ENCODE measurements at regions of chr4 and their contacts with region 1.

Region 1: DNA sequence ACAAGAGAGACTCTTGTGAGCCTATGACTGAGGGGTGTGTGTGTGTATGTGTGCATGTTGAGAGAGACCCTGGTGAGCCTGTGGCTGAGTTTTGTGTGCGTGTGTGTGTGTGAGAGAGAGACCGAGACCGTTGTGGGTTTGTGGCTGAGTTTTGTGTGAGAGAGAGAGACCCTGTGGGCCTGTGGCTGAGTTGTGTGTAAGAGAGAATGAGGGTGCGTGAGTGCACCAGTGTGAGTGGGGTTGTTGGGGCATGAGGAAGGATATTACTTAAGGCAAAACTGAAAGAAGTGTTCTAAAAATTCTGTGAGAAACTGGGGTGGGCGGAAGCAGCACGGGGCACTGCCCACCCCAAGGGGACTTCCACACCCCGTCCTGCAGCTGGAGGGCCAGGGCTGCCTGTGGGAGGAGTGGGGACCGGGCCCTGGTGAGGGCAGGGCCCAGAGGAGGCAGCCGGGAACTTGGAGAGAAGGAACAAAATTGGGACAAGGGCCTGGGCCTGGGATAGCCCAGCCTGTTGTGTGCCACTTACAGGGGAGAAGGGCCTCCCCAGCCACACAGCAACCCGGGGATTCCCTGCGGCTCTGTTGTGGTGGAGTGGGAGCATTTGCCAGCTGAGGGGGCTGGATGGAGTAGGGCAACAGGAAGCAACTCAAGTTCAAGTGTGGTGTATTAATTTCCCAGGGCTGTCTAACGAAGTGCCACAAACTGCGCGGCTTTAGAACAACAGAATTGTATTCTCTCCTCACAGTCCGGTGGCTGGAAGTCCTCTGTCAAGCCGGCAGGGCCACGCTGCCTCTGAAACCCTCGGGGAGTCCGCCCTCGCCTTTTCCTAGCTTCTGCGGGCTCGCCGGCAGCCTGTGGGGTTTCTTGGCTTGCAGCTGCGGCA is 22.1 kb downstream of the TMEM131L start:
- DNase-seq: peak; percentile 94
- ATAC-seq: peak; percentile 63
- H3K4me3 ChIP-seq: peak overlapping the region; percentile 85
- H3K27ac ChIP-seq: peak overlapping the region; percentile 81
- H3K4me1 ChIP-seq: peaks cover 32% of the 10 kb centered on the region
- H3K27me3 ChIP-seq: no peaks in the 10 kb centered on the region
- CTCF ChIP-seq: no peak
- EP300 ChIP-seq: peak; percentile 32 to 66; a peak in 2 of 4 replicates
- POLR2A ChIP-seq: peak; percentile 70
- RAD21 ChIP-seq: no peak

Region 2: DNA sequence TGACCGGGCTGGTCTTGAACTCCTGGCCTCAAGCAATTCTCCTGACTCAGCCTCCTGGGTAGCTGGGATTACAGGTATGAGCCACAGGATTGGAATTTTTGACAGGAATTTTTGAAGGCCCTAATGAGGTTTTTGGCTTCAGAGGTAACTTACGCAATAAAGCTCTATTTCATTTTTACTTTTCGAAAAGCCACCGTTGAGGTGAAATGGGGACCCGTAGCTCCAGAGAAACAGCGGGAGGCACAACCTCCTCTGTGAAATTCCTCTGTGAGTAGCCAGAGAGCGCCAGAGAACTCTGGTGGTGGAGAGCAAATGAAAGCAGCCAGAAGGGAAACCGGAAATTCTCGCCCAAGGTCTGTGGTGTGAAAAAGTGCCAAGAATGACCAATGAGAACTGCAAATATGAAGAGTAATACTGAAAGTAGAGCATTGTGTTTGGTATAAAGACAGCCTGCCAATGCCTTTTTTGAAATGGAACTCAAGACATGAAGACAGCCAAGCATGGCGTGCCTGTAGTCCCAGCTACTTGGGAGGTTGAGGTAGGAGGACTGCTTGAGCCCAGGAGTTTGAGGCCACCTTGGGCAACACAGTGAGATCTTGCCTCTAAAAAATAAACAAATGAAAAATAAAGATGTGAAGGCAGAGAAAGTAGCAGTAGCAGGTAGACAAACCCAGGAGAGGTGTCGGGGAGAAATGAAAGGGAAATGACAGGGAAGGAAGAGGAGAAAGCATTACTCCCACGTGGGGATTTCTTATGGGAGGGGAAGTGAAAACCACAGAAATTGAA is 55.1 kb before region 1 on chr4:
- CTCF ChIA-PET with region 1: interaction called, 16 read pairs
- POLR2A ChIA-PET with region 1: interaction called, 9 read pairs
- RAD21 ChIA-PET with region 1: interaction called, 28 read pairs
- SMC1A ChIA-PET with region 1: interaction called, 32 read pairs
- in situ Hi-C with region 1: no loop called
- intact Hi-C with region 1: loop called (anchors 1 kb)
- DNase-seq: peak; percentile 99
- ATAC-seq: peak; percentile 91
- H3K4me3 ChIP-seq: peak overlapping the region; percentile 56
- H3K27ac ChIP-seq: peak overlapping the region; percentile 84
- H3K4me1 ChIP-seq: peaks cover 31% of the 10 kb centered on the region
- H3K27me3 ChIP-seq: no peaks in the 10 kb centered on the region
- CTCF ChIP-seq: peak; percentile 86 to 96 (median 93)
- EP300 ChIP-seq: peak; percentile 78
- POLR2A ChIP-seq: peak; percentile 57
- RAD21 ChIP-seq: peak; percentile 99

Region 3: DNA sequence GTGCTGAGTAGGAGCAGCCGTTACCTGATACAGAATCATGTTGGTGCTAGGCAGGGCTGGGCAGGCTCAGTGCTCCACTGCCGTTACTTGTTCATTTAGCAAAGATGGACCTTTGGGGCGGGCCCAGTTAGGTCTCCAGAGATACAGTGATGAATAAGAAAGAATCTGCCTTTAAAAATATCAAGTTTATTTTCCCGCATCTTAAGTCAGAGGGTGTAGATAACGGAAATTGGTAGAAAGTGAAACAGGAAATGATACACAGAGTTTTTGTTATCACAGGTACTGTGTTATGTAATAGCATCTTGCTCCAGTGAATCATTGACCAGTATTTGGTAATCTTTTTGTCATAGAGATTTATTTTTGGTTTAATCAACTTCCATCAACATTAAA is 16.6 kb before region 1 on chr4:
- CTCF ChIA-PET with region 1: interaction called, 54 read pairs
- POLR2A ChIA-PET with region 1: interaction called, 268 read pairs
- RAD21 ChIA-PET with region 1: interaction called, 429 read pairs
- SMC1A ChIA-PET with region 1: interaction called, 356 read pairs
- in situ Hi-C with region 1: no loop called
- intact Hi-C with region 1: loop called (anchors 1 kb)
- DNase-seq: no peak
- ATAC-seq: peak; percentile 23
- H3K4me3 ChIP-seq: peak overlapping the region; percentile 98
- H3K27ac ChIP-seq: peak overlapping the region; percentile 80
- H3K4me1 ChIP-seq: peaks cover 45% of the 10 kb centered on the region
- H3K27me3 ChIP-seq: no peaks in the 10 kb centered on the region
- CTCF ChIP-seq: no peak
- EP300 ChIP-seq: no peak; a peak in 1 of 4 replicates
- POLR2A ChIP-seq: no peak
- RAD21 ChIP-seq: no peak

Region 4: GRCh38 chr4:153514001-153514526 is 25.8 kb after region 1 on chr4:
- CTCF ChIA-PET with region 1: interaction called, 3 read pairs
- POLR2A ChIA-PET with region 1: interaction called, 322 read pairs
- RAD21 ChIA-PET with region 1: interaction called, 197 read pairs
- SMC1A ChIA-PET with region 1: interaction called, 85 read pairs
- in situ Hi-C with region 1: no loop called
- intact Hi-C with region 1: no loop called
- DNase-seq: no peak
- ATAC-seq: peak; percentile 40
- H3K4me3 ChIP-seq: no peak overlapping the region
- H3K27ac ChIP-seq: peak overlapping the region; percentile 15; the same call in 1 of the 2 replicates
- H3K4me1 ChIP-seq: peaks cover 30% of the 10 kb centered on the region
- H3K27me3 ChIP-seq: no peaks in the 10 kb centered on the region
- CTCF ChIP-seq: no peak
- EP300 ChIP-seq: no peak
- POLR2A ChIP-seq: no peak
- RAD21 ChIP-seq: no peak

Region 5: DNA sequence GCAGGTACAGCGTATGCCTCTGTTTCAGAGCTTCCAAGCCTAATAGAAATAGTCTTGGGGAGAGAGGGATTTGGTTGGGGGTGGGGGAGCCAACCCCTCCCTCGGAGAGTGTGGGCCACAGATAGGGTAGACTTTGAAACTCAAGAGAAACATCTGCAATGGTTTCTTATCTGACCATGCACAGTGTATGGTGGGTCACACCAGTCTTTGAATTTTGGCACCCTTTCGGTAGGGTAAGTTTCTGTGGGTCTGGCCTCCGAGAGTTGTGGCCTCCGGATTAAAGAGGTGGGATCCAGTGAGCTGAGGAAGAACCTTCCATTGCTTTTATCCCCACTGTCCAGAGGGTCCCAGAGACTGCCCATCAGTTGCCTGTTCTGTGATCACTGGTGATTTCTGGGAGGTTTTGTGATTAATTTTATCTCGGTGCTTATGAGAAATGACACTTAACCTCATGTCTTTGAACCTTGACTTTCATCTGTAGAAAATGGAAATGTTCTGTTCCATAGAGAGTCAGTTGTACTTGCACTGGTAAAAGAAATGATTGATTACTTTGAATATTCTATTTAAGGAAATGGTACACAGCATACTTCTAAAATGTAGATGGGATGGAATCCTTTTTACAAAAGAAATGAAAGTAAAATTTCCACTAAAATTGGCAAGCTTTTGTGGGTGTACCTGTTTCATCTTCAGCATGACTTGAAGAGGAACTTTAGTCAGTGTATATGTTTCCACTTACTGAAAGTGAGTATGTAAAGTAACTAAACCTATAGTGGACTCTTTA is 40.6 kb after region 1 on chr4:
- CTCF ChIA-PET with region 1: interaction called, 11 read pairs
- POLR2A ChIA-PET with region 1: interaction called, 322 read pairs
- RAD21 ChIA-PET with region 1: interaction called, 197 read pairs
- SMC1A ChIA-PET with region 1: interaction called, 85 read pairs
- in situ Hi-C with region 1: no loop called
- intact Hi-C with region 1: no loop called
- DNase-seq: no peak
- ATAC-seq: peak; percentile 73
- H3K4me3 ChIP-seq: peak overlapping the region; percentile 58
- H3K27ac ChIP-seq: peak overlapping the region; percentile 77
- H3K4me1 ChIP-seq: peaks cover 77% of the 10 kb centered on the region
- H3K27me3 ChIP-seq: no peaks in the 10 kb centered on the region
- CTCF ChIP-seq: no peak
- EP300 ChIP-seq: no peak
- POLR2A ChIP-seq: no peak
- RAD21 ChIP-seq: no peak

Region 6: DNA sequence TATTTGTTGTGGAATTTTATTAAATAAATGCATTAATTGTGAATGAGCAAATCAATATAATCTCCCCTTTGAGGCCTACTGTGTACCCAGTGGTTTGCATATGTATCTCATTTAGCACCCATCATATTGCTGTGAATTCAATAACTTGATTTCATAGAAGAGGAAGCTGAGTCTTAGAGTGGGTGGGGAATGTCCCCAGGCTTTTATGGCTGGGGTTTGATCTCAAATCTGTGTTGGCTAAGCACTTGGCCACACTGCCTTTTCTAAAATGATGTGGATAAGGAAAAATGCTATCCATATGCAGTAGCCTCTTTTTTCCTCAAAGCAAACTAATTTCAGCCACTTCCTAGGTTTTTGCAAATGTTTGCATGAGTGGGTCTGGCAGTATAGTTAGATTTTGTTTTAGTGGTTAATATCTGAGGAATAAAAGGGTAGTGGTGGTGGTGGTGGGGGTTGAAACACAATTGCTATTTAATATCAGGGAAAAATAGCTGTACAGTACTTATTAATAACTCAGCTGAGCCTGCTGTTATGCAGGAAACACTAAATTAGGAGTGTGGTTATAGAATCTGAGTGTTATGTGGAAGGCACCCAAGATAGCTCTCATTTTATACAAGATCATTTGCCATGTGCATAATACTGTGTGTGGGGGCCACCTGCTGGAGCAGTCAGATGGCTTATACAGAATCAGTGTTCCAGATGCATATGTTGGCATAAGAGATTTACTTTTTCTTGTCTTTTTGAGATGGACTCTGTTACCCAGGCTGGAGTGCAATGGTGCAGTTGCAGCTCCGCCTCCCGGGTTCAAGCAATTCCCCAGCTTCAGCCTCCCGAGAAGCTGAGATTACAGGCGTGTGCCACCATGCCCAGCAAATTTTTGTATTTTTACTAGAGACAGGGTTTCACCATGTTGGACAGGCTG is 85.9 kb after region 1 on chr4:
- CTCF ChIA-PET with region 1: interaction called, 13 read pairs
- POLR2A ChIA-PET with region 1: interaction called, 5 read pairs
- RAD21 ChIA-PET with region 1: interaction called, 10 read pairs
- SMC1A ChIA-PET with region 1: interaction called, 11 read pairs
- in situ Hi-C with region 1: no loop called
- intact Hi-C with region 1: loop called (anchors 2 kb)
- DNase-seq: no peak
- ATAC-seq: peak; percentile 60
- H3K4me3 ChIP-seq: no peak overlapping the region
- H3K27ac ChIP-seq: peak overlapping the region; percentile 48
- H3K4me1 ChIP-seq: peaks cover 50% of the 10 kb centered on the region
- H3K27me3 ChIP-seq: no peaks in the 10 kb centered on the region
- CTCF ChIP-seq: peak; percentile 41 to 65 (median 53)
- EP300 ChIP-seq: no peak
- POLR2A ChIP-seq: no peak
- RAD21 ChIP-seq: peak; percentile 81

Region 7: GRCh38 chr4:153661211-153661822 is 173.1 kb after region 1 on chr4:
- CTCF ChIA-PET with region 1: no interaction called
- POLR2A ChIA-PET with region 1: no interaction called
- RAD21 ChIA-PET with region 1: no interaction called
- SMC1A ChIA-PET with region 1: no interaction called
- in situ Hi-C with region 1: no loop called
- intact Hi-C with region 1: no loop called
- DNase-seq: no peak
- ATAC-seq: no peak
- H3K4me3 ChIP-seq: no peak overlapping the region
- H3K27ac ChIP-seq: no peak overlapping the region
- H3K4me1 ChIP-seq: no peaks in the 10 kb centered on the region
- H3K27me3 ChIP-seq: no peaks in the 10 kb centered on the region
- CTCF ChIP-seq: no peak
- EP300 ChIP-seq: no peak
- POLR2A ChIP-seq: no peak
- RAD21 ChIP-seq: no peak

Region 8: DNA sequence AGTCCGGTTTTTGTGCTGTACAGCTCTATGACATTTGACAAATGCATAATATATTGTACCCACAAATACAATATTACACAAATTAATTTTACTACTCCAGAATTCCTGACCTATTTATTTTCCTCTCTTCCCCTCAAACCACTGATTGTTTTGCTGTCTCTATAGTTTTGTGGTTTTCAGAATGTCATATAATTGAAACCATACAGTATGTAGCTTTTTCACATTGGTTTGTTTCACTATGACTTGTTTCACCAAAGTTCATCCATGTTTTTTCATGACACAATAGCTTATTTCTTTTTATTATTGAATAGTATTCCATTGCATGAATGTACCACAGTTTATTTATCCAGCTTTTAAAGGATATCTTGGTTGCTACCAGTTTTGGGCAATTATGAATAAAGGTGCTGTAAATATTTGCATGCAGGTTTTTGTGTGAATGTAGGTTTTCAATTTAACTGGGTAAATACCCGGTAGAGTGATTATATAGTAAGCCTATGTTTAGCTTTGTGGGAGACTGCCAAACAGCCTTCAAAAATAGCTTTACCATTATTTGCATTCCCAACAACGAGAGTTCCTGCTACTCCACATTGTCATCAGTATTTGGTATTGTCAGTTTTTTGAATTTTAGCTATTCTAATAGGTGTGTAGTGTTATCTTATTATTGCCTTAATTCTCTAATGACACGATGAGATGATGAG is 245.7 kb after region 1 on chr4:
- CTCF ChIA-PET with region 1: no interaction called
- POLR2A ChIA-PET with region 1: no interaction called
- RAD21 ChIA-PET with region 1: no interaction called
- SMC1A ChIA-PET with region 1: no interaction called
- in situ Hi-C with region 1: no loop called
- intact Hi-C with region 1: no loop called
- DNase-seq: no peak
- ATAC-seq: peak; percentile 40
- H3K4me3 ChIP-seq: no peak overlapping the region
- H3K27ac ChIP-seq: no peak overlapping the region
- H3K4me1 ChIP-seq: peaks cover 5% of the 10 kb centered on the region; the same call in 1 of the 2 replicates
- H3K27me3 ChIP-seq: 0 out of 4 replicates have a peak, but pooled peaks cover 0 to 4% of the 10 kb centered on the region in 2 experiments
- CTCF ChIP-seq: no peak
- EP300 ChIP-seq: no peak
- POLR2A ChIP-seq: no peak
- RAD21 ChIP-seq: no peak

Measured in GM12878 (cell line).